ENCODE measurements at regions of chr2 and their contacts with region 1.

Region 1: DNA sequence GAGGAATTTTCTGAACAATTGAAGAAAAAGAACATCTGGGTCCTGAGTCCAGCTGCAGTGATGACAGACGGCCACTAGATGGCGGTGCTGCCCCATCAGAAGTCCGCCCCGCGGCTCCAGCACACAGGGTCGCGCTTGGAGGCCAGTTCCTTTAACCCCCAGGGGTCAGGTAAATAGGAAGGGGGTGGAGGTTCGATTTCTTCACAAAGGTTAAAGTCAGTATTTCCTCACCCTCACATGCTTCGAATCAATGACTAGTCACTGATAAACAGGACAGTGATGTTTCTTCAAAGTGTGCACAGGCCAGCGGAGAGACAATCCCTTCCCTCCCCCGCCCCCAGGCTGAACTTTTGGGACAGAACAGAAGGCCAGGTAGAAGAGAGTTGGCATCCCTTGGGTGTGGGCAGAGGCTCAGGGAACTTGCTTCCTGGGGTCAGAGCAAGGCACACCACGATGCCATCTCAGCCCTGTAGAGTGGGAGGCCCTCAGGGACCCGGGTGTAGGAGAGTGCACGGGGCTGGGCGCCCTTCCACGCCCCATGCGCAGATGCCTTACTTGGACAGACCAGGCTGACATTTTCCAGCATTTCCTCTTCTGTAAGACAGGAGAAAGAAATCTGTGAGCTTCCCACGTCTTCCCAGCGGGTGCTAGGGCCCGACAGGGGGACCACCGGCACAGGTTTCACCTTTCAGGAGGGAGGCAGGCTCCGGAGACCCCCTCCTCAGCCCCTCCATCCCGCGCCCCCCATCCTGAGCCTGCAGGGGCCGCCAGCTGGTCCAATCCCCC is 722 bp downstream of the APOB start:
- DNase-seq: peak; percentile 34 to 80 (median 59)
- H3K4me3 ChIP-seq: no peak overlapping the region
- H3K27ac ChIP-seq: no peak overlapping the region
- H3K4me1 ChIP-seq: no peaks in the 10 kb centered on the region
- H3K27me3 ChIP-seq: peaks cover 4% of the 10 kb centered on the region
- CTCF ChIP-seq: peak; percentile 89 to 100 (median 97)
- POLR2A ChIP-seq: no peak

Region 2: GRCh38 chr2:20650880-20651730 is 392.0 kb before region 1 on chr2 and contains the start of gene HS1BP3:
- intact Hi-C with region 1: no loop called
- DNase-seq: peak; percentile 72 to 91 (median 83)
- H3K4me3 ChIP-seq: peak within 1 kb of the TSS; percentile 16 to 82 (median 76)
- H3K27ac ChIP-seq: peak within 1 kb of the TSS; percentile 30 to 96 (median 93)
- H3K4me1 ChIP-seq: peaks cover 12 to 40% of the 10 kb centered on the region in 2 donors
- H3K27me3 ChIP-seq: no peaks in the 10 kb centered on the region
- CTCF ChIP-seq: peak in 5 of 6 experiments; percentile 19 to 100 (median 92)
- POLR2A ChIP-seq: peak; percentile 83 to 87
- total RNA-seq, gene HS1BP3: 33.0 to 50.1 (median 42.6) TPM

Region 3: GRCh38 chr2:21118302-21118920 is 75.3 kb after region 1 on chr2:
- intact Hi-C with region 1: loop called (anchors 2 to 10 kb)
- DNase-seq: peak in 6 of 7 donors; percentile 19 to 65 (median 40)
- H3K4me3 ChIP-seq: no peak overlapping the region
- H3K27ac ChIP-seq: no peak overlapping the region
- H3K4me1 ChIP-seq: no peaks in the 10 kb centered on the region
- H3K27me3 ChIP-seq: no peaks in the 10 kb centered on the region
- CTCF ChIP-seq: peak; percentile 25 to 60 (median 49)
- POLR2A ChIP-seq: no peak

Region 4: GRCh38 chr2:21310493-21310892 is 267.3 kb after region 1 on chr2:
- intact Hi-C with region 1: loop called (anchors 5 to 10 kb)
- DNase-seq: no peak
- H3K4me3 ChIP-seq: no peak overlapping the region
- H3K27ac ChIP-seq: no peak overlapping the region
- H3K4me1 ChIP-seq: peaks cover 0 to 5% of the 10 kb centered on the region in 2 donors
- H3K27me3 ChIP-seq: no peaks in the 10 kb centered on the region
- CTCF ChIP-seq: no peak
- POLR2A ChIP-seq: no peak

Region 5: GRCh38 chr2:21317131-21317530 is 274.0 kb after region 1 on chr2:
- intact Hi-C with region 1: loop called (anchors 5 to 10 kb)
- DNase-seq: peak; percentile 43 to 82 (median 64)
- H3K4me3 ChIP-seq: no peak overlapping the region
- H3K27ac ChIP-seq: no peak overlapping the region
- H3K4me1 ChIP-seq: peaks cover 0 to 5% of the 10 kb centered on the region in 2 donors
- H3K27me3 ChIP-seq: no peaks in the 10 kb centered on the region
- CTCF ChIP-seq: peak; percentile 63 to 82 (median 76)
- POLR2A ChIP-seq: no peak